ENCODE measurements at regions of chr6 and their contacts with region 1.

Region 1: DNA sequence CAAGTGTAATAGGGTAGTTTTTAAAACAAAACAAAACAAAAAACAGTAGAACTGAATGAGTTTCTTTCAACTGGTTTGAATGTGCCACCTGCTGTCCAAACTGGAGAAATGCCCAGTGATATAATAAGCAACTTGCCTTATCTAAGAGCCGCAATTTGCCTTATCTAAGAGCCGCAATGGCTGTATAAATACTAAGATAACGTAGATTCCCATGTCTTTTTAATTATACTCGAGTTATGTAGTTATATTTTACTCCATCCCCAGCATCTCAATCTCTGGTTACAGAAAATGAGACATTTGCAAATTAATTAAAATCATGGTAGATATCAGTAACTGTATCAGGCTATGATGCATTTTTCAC is 67.2 kb downstream of the RPP40 start:
- DNase-seq: peak; percentile 67 to 75 (median 70)
- ATAC-seq: peak; percentile 77
- H3K4me3 ChIP-seq: no peak overlapping the region
- H3K27ac ChIP-seq: no peak overlapping the region
- H3K4me1 ChIP-seq: peaks cover 10 to 12% of the 10 kb centered on the region in 2 experiments
- H3K27me3 ChIP-seq: no peaks in the 10 kb centered on the region
- CTCF ChIP-seq: peak; percentile 60 to 83 (median 69)
- EP300 ChIP-seq: peak; percentile 79
- POLR2A ChIP-seq: no peak
- RAD21 ChIP-seq: peak; percentile 91 to 93

Region 2: DNA sequence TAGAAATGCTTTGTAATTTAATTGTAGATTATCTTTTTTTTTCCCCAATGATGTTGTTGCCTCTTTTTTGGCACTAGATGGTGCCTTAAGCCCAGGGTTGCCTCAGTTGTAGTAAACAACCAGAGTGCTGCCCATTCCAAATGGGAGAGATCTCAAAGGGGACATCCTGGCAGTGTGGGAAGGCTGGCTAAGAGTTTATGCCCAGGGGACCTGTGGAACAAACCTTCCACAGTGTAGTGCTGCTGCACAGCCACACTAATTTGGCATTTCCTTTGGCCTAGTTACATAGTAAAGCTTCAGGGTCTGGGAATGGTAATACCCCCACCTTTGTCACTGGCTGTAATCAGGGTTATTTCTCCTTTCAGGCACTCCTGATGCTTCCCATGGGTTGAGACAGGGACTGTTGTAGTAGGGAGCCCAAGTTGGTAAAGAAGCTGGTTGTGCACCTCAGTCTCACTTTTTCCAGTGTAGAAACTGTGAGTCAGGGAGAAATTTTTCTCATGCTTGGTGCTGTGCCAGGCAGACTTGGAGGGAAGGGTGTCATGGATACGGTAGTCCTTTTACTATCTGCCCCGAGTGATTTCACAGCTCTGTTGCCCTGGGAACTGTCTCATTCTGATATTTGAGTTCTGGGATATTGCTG is 623.5 kb before region 1 on chr6:
- CTCF ChIA-PET with region 1: interaction called, 3 read pairs
- POLR2A ChIA-PET with region 1: no interaction called
- in situ Hi-C with region 1: loop called (anchors 10 kb)
- intact Hi-C with region 1: no loop called
- DNase-seq: no peak
- ATAC-seq: no peak
- H3K4me3 ChIP-seq: no peak overlapping the region
- H3K27ac ChIP-seq: no peak overlapping the region
- H3K4me1 ChIP-seq: peaks cover 0 to 9% of the 10 kb centered on the region in 2 experiments; a peak in 2 of 5 replicates
- H3K27me3 ChIP-seq: no peaks in the 10 kb centered on the region
- CTCF ChIP-seq: peak in 2 of 3 experiments; percentile 36 to 48; a peak in 3 of 6 replicates
- EP300 ChIP-seq: no peak
- POLR2A ChIP-seq: no peak
- RAD21 ChIP-seq: peak; percentile 53 to 84

Region 3: GRCh38 chr6:4620284-4621151 is 316.1 kb before region 1 on chr6:
- CTCF ChIA-PET with region 1: no interaction called
- POLR2A ChIA-PET with region 1: no interaction called
- in situ Hi-C with region 1: no loop called
- intact Hi-C with region 1: loop called (anchors 5 kb)
- DNase-seq: peak; percentile 48 to 81 (median 60)
- ATAC-seq: peak; percentile 81
- H3K4me3 ChIP-seq: no peak overlapping the region
- H3K27ac ChIP-seq: peak overlapping the region; percentile 27; the same call in 1 of the 3 replicates
- H3K4me1 ChIP-seq: peaks cover 9 to 25% of the 10 kb centered on the region in 2 experiments; a peak in 3 of 5 replicates
- H3K27me3 ChIP-seq: peaks cover 12 to 30% of the 10 kb centered on the region in 2 experiments
- CTCF ChIP-seq: no peak
- EP300 ChIP-seq: peak; percentile 95
- POLR2A ChIP-seq: no peak
- RAD21 ChIP-seq: 0 out of 4 replicates have a peak, but pooled peaks of 1 of the 2 experiments have one; percentile 11

Region 4: GRCh38 chr6:4788953-4789584 is 147.6 kb before region 1 on chr6:
- CTCF ChIA-PET with region 1: no interaction called
- POLR2A ChIA-PET with region 1: no interaction called
- in situ Hi-C with region 1: no loop called
- intact Hi-C with region 1: loop called (anchors 10 kb)
- DNase-seq: no peak
- ATAC-seq: peak; percentile 36; the same call in 2 of the 3 replicates
- H3K4me3 ChIP-seq: no peak overlapping the region
- H3K27ac ChIP-seq: no peak overlapping the region
- H3K4me1 ChIP-seq: peaks cover 5 to 18% of the 10 kb centered on the region in 2 experiments; a peak in 4 of 5 replicates
- H3K27me3 ChIP-seq: no peaks in the 10 kb centered on the region
- CTCF ChIP-seq: 0 out of 6 replicates have a peak, but pooled peaks of 1 of the 3 experiments have one; percentile 9
- EP300 ChIP-seq: no peak
- POLR2A ChIP-seq: no peak
- RAD21 ChIP-seq: no peak

Region 5: GRCh38 chr6:4848382-4849068 is 88.1 kb before region 1 on chr6:
- CTCF ChIA-PET with region 1: no interaction called
- POLR2A ChIA-PET with region 1: no interaction called
- in situ Hi-C with region 1: no loop called
- intact Hi-C with region 1: loop called (anchors 2 kb)
- DNase-seq: peak in 3 of 4 experiments; percentile 36 to 73 (median 49)
- ATAC-seq: peak; percentile 94
- H3K4me3 ChIP-seq: no peak overlapping the region
- H3K27ac ChIP-seq: no peak overlapping the region
- H3K4me1 ChIP-seq: peaks cover under 1 to 17% of the 10 kb centered on the region in 2 experiments; a peak in 4 of 5 replicates
- H3K27me3 ChIP-seq: no peaks in the 10 kb centered on the region
- CTCF ChIP-seq: peak; percentile 74 to 81 (median 74)
- EP300 ChIP-seq: no peak
- POLR2A ChIP-seq: no peak
- RAD21 ChIP-seq: peak; percentile 69 to 88

Region 6: DNA sequence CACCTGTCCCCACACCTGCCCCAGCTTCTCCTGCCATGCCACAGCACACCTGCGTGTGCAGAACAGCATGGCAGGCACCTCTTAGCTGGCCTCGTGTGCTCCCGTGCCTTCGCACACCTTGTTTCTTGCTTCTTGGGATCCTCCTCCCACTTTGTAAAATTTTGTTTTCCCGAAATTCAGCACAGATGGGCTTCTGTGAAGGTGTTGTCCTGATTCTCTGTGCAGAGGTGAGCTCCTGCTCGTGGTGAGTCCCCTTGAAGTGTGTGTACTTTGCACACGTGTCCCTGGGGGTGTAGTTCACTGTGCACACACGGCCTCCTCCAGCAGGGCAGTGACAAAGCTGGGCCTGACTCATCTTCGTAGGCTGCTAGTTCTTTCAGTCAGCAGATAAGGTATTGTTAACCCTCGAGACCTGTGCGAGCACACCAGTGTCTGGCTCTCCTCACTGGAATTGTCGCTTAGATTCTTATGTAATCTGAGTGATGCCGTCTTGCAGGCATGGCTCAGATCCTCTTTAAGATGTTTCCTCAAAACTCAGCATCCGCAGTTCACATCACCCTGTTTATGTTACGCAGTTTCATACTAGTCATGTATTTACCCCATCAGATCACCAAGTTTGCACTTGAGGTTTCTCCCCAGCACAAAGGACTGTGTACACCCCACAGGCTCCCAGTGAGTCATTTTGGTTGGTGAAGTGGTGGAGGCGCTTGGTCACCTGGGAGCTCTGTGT is 82.7 kb before region 1 on chr6:
- CTCF ChIA-PET with region 1: no interaction called
- POLR2A ChIA-PET with region 1: no interaction called
- in situ Hi-C with region 1: no loop called
- intact Hi-C with region 1: loop called (anchors 1 kb)
- DNase-seq: peak in 2 of 4 experiments; percentile 71
- ATAC-seq: peak; percentile 85
- H3K4me3 ChIP-seq: no peak overlapping the region
- H3K27ac ChIP-seq: no peak overlapping the region
- H3K4me1 ChIP-seq: peaks cover 10 to 17% of the 10 kb centered on the region in 2 experiments; a peak in 4 of 5 replicates
- H3K27me3 ChIP-seq: no peaks in the 10 kb centered on the region
- CTCF ChIP-seq: no peak
- EP300 ChIP-seq: no peak
- POLR2A ChIP-seq: no peak
- RAD21 ChIP-seq: no peak

Region 7: GRCh38 chr6:5103250-5103649 is 166.6 kb after region 1 on chr6:
- CTCF ChIA-PET with region 1: no interaction called
- POLR2A ChIA-PET with region 1: no interaction called
- in situ Hi-C with region 1: no loop called
- intact Hi-C with region 1: no loop called
- DNase-seq: peak in 1 of 4 experiments; percentile 19
- ATAC-seq: no peak
- H3K4me3 ChIP-seq: no peak overlapping the region
- H3K27ac ChIP-seq: no peak overlapping the region
- H3K4me1 ChIP-seq: no peaks in the 10 kb centered on the region; a peak in 1 of 5 replicates
- H3K27me3 ChIP-seq: no peaks in the 10 kb centered on the region
- CTCF ChIP-seq: no peak
- EP300 ChIP-seq: no peak
- POLR2A ChIP-seq: no peak
- RAD21 ChIP-seq: no peak

Measured in K562 (cell line).